Colonic mucosa (tissue), 4 donors: ENCODE measurements at regions of chr2 and their contacts with region 1.

Region 1: DNA sequence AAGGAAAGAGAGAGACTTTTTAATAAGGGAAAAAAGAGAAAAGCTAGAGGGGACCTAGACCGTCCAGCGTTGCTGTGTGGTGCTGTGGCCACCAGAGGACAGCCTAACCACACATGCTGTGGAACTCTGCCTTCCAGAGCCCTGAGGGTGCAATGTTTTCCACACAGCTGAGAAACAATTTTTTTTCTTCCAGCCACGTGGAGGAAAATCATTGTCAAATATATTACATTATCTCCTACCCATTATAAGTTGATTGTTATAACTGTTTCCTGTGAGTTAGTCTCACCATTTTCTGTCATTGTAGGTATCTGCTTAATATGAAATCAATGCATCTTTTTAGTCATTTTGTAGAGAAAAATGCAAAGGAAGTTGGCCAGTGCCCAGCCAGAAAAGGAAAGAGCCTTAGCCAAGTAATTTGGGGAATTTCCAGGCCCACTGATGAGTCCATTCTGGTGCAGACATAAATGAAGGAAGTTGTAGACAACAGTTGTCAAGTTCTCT is 5.9 kb upstream of the MRPL19 start:
- DNase-seq: peak; percentile 46
- H3K4me3 ChIP-seq: no peak overlapping the region
- H3K27ac ChIP-seq: no peak overlapping the region
- H3K4me1 ChIP-seq: no peaks in the 10 kb centered on the region
- H3K27me3 ChIP-seq: no peaks in the 10 kb centered on the region
- CTCF ChIP-seq: peak; percentile 93

Region 2: DNA sequence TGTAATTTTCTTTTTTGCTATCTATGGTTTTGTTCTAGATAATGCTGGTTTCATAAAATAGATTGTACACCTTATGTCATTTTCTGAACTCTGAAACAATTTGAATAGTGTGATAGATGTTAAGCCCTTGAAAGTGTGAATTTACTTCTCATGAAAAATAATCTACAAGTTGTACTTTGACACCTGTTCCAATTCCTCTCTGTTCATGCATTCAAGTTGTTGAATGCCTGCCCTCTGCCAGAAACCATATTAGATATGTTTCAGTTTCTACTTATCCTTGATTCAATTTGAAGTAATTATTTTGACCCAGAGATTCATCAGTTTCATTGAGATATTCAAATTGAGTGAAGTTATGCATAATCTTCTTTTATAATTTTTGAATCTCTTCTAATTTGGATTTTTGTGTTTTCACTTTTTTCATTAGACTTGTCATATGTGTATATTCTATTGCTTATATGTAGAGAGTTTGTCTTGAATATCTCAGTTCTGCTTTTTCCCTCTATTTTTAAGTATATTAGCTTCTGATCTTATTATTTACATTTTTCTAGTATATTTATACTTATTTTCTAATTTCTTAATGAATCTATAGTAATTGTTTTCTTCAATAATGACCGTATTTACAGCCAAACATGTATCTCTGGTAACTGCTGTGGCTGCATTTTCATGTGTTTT is 298.0 kb before region 1 on chr2:
- intact Hi-C with region 1: no loop called
- DNase-seq: no peak
- H3K4me3 ChIP-seq: no peak overlapping the region
- H3K27ac ChIP-seq: no peak overlapping the region
- H3K4me1 ChIP-seq: no peaks in the 10 kb centered on the region
- H3K27me3 ChIP-seq: no peaks in the 10 kb centered on the region
- CTCF ChIP-seq: no peak

Region 3: GRCh38 chr2:75676464-75676863 is 35.8 kb after region 1 on chr2:
- intact Hi-C with region 1: loop called (anchors 5 kb)
- DNase-seq: no peak
- H3K4me3 ChIP-seq: no peak overlapping the region
- H3K27ac ChIP-seq: no peak overlapping the region
- H3K4me1 ChIP-seq: no peaks in the 10 kb centered on the region
- H3K27me3 ChIP-seq: no peaks in the 10 kb centered on the region
- CTCF ChIP-seq: no peak